ENCODE measurements at regions of chr12 and their contacts with region 1.

Region 1: GRCh38 chr12:94101738-94102660 is 46.4 kb upstream of the PLXNC1 start:
- DNase-seq: peak; percentile 71 to 91 (median 84)
- ATAC-seq: peak; percentile 86
- H3K4me3 ChIP-seq: peak overlapping the region; percentile 58 to 70
- H3K4me3 Mint-ChIP-seq: peak overlapping the region; percentile 87
- H3K27ac ChIP-seq: no peak overlapping the region
- H3K27ac Mint-ChIP-seq: peak overlapping the region; percentile 52
- H3K4me1 ChIP-seq: peaks cover 2% of the 10 kb centered on the region
- H3K4me1 Mint-ChIP-seq: peaks cover 11% of the 10 kb centered on the region
- H3K27me3 ChIP-seq: no peaks in the 10 kb centered on the region
- H3K27me3 Mint-ChIP-seq: peaks cover 33% of the 10 kb centered on the region
- CTCF ChIP-seq: peak; percentile 69

Region 2: DNA sequence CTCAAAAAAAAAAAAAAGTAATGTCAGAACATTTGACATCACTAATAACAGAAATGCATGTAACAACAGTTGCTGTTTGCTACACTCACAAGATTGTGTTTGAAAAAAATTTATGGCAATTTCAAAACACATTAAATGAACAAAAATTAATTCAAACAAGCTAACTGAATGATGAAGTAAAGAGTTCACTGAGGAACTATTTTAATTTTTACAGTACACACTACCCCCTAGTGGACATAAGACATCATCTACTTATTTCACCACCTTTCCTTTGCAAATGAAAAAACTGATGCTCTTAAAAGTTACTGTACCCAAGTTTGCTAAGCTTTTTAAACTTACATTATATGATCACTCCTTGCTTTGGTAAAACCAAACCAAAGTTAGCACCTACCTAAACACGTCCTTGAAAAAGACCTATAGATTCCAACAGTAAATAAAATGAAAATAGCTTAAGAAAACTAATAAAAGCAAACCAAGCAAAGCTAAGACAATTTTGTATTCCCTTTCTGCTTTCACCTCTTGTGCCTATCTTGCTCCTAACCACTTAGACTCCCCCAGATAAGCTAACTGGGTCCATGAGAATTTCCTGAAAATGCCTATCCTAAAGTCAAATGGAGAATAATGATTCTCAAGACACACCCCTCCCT is 682.5 kb before region 1 on chr12:
- CTCF ChIA-PET with region 1: interaction called, 16 read pairs
- POLR2A ChIA-PET with region 1: no interaction called
- intact Hi-C with region 1: loop called in 1 of 2 experiments (anchors 5 kb)
- DNase-seq: peak in 2 of 9 experiments; percentile 60 to 73
- ATAC-seq: peak; percentile 78
- H3K4me3 ChIP-seq: no peak overlapping the region
- H3K4me3 Mint-ChIP-seq: no peak overlapping the region
- H3K27ac ChIP-seq: peak overlapping the region in 1 of 2 experiments; percentile 19
- H3K27ac Mint-ChIP-seq: peak overlapping the region; percentile 38
- H3K4me1 ChIP-seq: peaks cover 40% of the 10 kb centered on the region
- H3K4me1 Mint-ChIP-seq: peaks cover 87% of the 10 kb centered on the region
- H3K27me3 ChIP-seq: no peaks in the 10 kb centered on the region
- H3K27me3 Mint-ChIP-seq: no peaks in the 10 kb centered on the region
- CTCF ChIP-seq: peak; percentile 69

Region 3: DNA sequence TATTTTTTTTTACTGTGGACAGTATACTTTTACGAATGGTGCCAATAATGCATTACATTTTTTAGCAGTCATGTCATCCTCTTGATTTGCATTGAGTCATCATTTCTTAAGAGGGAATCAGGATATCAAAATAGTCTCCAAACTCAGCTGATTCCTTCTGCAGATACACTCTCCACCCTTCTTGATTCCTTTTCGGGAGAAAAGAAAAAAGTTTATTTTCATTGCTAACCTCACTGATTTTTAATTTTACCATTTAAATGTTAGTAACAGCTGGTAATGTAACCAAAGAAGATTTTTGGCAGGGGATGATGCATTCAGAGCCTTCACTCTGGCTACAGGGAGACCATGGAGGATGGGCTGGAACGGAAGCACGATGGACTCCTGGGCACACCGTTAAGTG is 587.1 kb before region 1 on chr12:
- CTCF ChIA-PET with region 1: interaction called, 379 read pairs
- POLR2A ChIA-PET with region 1: no interaction called
- intact Hi-C with region 1: no loop called
- DNase-seq: no peak
- ATAC-seq: no peak
- H3K4me3 ChIP-seq: no peak overlapping the region
- H3K4me3 Mint-ChIP-seq: no peak overlapping the region
- H3K27ac ChIP-seq: no peak overlapping the region
- H3K27ac Mint-ChIP-seq: no peak overlapping the region
- H3K4me1 ChIP-seq: no peaks in the 10 kb centered on the region
- H3K4me1 Mint-ChIP-seq: no peaks in the 10 kb centered on the region
- H3K27me3 ChIP-seq: no peaks in the 10 kb centered on the region
- H3K27me3 Mint-ChIP-seq: no peaks in the 10 kb centered on the region
- CTCF ChIP-seq: no peak

Region 4: DNA sequence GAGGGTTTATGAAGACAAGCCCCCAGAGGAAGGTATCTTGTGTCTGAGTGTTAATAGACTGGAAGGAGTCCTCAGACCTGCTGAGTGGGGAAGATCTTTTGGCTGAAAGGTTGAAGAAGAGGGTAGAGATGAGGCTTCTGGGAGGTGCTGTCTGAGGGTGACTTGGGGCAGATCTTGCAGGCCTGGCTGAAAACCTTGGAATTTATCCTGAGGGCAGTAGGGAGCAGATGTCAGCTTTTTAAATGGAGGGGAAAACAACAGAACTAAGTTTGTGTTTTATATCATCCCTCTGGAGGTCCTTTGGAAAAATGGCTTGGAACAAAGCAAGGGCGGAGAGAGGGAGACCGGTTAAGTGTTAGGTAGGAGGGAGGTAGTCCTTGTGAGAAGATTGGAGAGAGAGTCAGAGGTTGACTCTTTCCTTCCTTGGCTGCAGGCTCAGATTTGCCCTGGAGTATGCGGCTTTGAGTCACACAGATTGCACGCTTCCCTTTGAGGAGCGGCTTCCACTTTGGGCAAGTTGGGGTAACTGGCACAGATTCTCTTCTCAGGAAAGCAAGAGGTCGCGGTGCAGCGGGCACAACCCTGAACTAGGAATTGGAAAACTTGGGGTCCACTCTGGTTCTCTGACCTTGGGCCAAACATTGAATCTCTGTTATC is 519.8 kb before region 1 on chr12:
- CTCF ChIA-PET with region 1: interaction called, 13 read pairs
- POLR2A ChIA-PET with region 1: no interaction called
- intact Hi-C with region 1: no loop called
- DNase-seq: no peak
- ATAC-seq: no peak
- H3K4me3 ChIP-seq: no peak overlapping the region
- H3K4me3 Mint-ChIP-seq: no peak overlapping the region
- H3K27ac ChIP-seq: no peak overlapping the region
- H3K27ac Mint-ChIP-seq: no peak overlapping the region
- H3K4me1 ChIP-seq: no peaks in the 10 kb centered on the region
- H3K4me1 Mint-ChIP-seq: no peaks in the 10 kb centered on the region
- H3K27me3 ChIP-seq: no peaks in the 10 kb centered on the region
- H3K27me3 Mint-ChIP-seq: no peaks in the 10 kb centered on the region
- CTCF ChIP-seq: no peak

Region 5: GRCh38 chr12:93785262-93786010 is 316.6 kb before region 1 on chr12:
- CTCF ChIA-PET with region 1: interaction called, 11 read pairs
- POLR2A ChIA-PET with region 1: no interaction called
- intact Hi-C with region 1: no loop called
- DNase-seq: peak in 6 of 9 experiments; percentile 12 to 61 (median 48)
- ATAC-seq: peak; percentile 52
- H3K4me3 ChIP-seq: no peak overlapping the region
- H3K4me3 Mint-ChIP-seq: no peak overlapping the region
- H3K27ac ChIP-seq: no peak overlapping the region
- H3K27ac Mint-ChIP-seq: peak overlapping the region; percentile 42
- H3K4me1 ChIP-seq: peaks cover 33% of the 10 kb centered on the region
- H3K4me1 Mint-ChIP-seq: peaks cover 57% of the 10 kb centered on the region
- H3K27me3 ChIP-seq: no peaks in the 10 kb centered on the region
- H3K27me3 Mint-ChIP-seq: no peaks in the 10 kb centered on the region
- CTCF ChIP-seq: no peak

Region 6: GRCh38 chr12:94080348-94081009 is 21.5 kb before region 1 on chr12:
- CTCF ChIA-PET with region 1: interaction called, 57 read pairs
- POLR2A ChIA-PET with region 1: interaction called, 3 read pairs
- intact Hi-C with region 1: no loop called
- DNase-seq: no peak
- ATAC-seq: no peak
- H3K4me3 ChIP-seq: no peak overlapping the region
- H3K4me3 Mint-ChIP-seq: no peak overlapping the region
- H3K27ac ChIP-seq: no peak overlapping the region
- H3K27ac Mint-ChIP-seq: no peak overlapping the region
- H3K4me1 ChIP-seq: no peaks in the 10 kb centered on the region
- H3K4me1 Mint-ChIP-seq: peaks cover 6% of the 10 kb centered on the region
- H3K27me3 ChIP-seq: no peaks in the 10 kb centered on the region
- H3K27me3 Mint-ChIP-seq: peaks cover 10% of the 10 kb centered on the region
- CTCF ChIP-seq: no peak